Activated CD8-positive, alpha-beta T cell treated with anti-CD3 and anti-CD28 coated beads for 36 hours (primary cell): ENCODE measurements at regions of chr6 and their contacts with region 1.

Region 1: DNA sequence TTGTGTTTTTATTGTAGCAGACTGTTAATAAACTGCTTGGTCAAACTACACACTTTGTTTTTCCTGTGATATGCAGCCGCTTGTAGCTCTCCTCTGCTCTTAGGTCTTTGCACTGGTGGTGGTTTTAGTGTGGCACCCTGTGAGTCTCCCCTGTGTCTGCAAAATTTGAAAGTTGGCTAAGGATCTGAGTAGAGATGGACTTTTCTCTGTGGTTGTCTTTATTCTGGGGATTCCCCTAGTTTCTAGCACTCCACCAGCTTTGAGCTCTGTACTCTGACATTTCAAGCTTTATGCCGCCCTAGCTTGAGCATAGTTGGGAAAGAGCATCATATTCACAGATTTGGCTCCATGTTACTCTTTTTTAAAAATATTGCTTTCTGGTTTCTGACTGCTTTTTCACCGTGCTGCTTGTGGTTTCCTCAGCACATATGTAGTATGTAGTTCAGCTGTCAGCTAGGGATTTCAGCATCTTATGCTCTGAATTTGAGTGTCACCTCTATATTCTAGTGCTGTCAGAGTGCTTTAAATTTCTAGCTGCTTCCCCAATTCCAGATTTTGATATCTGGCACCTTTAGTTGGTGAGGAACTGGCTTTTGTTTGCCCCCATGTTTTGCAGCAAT is 25.4 kb downstream of the CDYL start:
- DNase-seq: peak; percentile 33
- ATAC-seq: peak; percentile 86
- H3K4me3 Mint-ChIP-seq: no peak overlapping the region
- H3K27ac Mint-ChIP-seq: peak overlapping the region; percentile 21
- H3K4me1 Mint-ChIP-seq: peaks cover 79% of the 10 kb centered on the region
- H3K27me3 Mint-ChIP-seq: no peaks in the 10 kb centered on the region
- CTCF ChIP-seq: no peak

Region 2: DNA sequence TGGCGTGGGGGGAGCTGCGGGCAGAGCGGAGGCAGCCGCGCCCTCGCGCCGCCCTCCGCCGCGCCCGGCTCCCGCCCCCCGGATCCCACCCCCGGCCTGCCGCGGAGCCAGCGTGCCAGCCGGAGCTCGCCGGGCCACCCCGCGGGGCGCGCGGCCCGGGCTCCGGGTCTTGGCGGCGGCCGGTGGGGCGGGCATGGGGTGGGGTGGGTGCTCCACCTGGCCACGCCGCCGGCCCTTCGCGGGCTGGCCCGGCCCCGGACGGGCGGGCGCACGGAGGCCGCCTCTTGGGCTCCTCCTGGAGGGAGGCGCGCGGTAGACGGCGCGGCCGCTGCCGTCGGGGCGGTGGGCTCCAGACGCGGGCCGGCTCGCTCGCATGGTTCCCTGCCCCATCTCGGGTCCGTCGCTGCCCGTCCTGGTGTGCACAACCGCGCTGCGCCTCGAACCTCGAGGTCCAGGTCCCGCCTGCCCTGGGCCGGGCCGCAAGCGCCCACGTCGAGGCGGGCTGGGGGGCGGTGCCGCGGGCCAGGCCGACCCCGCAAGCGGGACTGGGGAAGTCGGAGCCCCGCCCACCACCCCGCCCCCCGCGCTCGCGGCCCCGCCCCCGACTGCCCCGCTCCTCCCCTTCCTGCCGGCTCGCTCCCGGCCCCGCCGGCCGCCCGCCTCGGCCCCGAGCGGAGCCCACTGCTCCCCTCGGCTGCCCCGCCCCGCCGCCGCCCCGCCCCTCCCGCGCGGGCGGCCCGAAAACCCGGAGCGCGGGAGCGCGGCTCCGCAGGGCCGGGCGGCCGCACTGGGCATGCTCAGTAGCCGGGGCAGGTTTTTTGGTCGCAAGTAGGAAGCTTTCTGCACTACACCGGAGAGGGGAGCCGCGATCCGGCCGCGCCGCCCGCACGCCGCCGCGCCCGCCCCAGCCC is 25.8 kb before region 1 on chr6 and contains the start of gene CDYL:
- CTCF ChIA-PET with region 1: interaction called, 6 read pairs
- POLR2A ChIA-PET with region 1: interaction called, 10 read pairs
- intact Hi-C with region 1: no loop called
- DNase-seq: peak; percentile 85
- ATAC-seq: peak; percentile 83
- H3K4me3 Mint-ChIP-seq: peak within 1 kb of the TSS; percentile 80
- H3K27ac Mint-ChIP-seq: peak within 1 kb of the TSS; percentile 94
- H3K4me1 Mint-ChIP-seq: peaks cover 56% of the 10 kb centered on the region
- H3K27me3 Mint-ChIP-seq: no peaks in the 10 kb centered on the region
- CTCF ChIP-seq: no peak
- total RNA-seq, gene CDYL: 31.1 to 31.2 TPM

Region 3: GRCh38 chr6:4788953-4789584 is 12.5 kb before region 1 on chr6:
- CTCF ChIA-PET with region 1: interaction called, 18 read pairs
- POLR2A ChIA-PET with region 1: interaction called, 3 read pairs
- intact Hi-C with region 1: no loop called
- DNase-seq: no peak
- ATAC-seq: no peak
- H3K4me3 Mint-ChIP-seq: no peak overlapping the region
- H3K27ac Mint-ChIP-seq: peak overlapping the region; percentile 50
- H3K4me1 Mint-ChIP-seq: peaks cover 64% of the 10 kb centered on the region
- H3K27me3 Mint-ChIP-seq: no peaks in the 10 kb centered on the region
- CTCF ChIP-seq: no peak